B cell (primary cell): ENCODE measurements at regions of chr21 and their contacts with region 1.

Region 1: GRCh38 chr21:32727687-32728455 is at the start of gene SYNJ1:
- DNase-seq: peak; percentile 95
- ATAC-seq: peak; percentile 92
- H3K4me3 ChIP-seq: peak within 1 kb of the TSS; percentile 77 to 92 (median 88)
- H3K4me3 Mint-ChIP-seq: peak within 1 kb of the TSS; percentile 94
- H3K27ac ChIP-seq: peak within 1 kb of the TSS; percentile 32 to 54
- H3K27ac Mint-ChIP-seq: peak within 1 kb of the TSS; percentile 82
- H3K4me1 ChIP-seq: peaks cover 13 to 18% of the 10 kb centered on the region in 2 donors
- H3K4me1 Mint-ChIP-seq: peaks cover 16% of the 10 kb centered on the region
- H3K27me3 ChIP-seq: peaks cover 0 to 4% (median 0%) of the 10 kb centered on the region in 4 experiments
- H3K27me3 Mint-ChIP-seq: no peaks in the 10 kb centered on the region
- CTCF ChIP-seq: no peak
- total RNA-seq, gene SYNJ1: 9.2 and 9.4 TPM in 2 replicates

Region 2: GRCh38 chr21:32392880-32393676 is 334.8 kb before region 1 on chr21 and contains the start of gene URB1:
- CTCF ChIA-PET with region 1: no interaction called
- POLR2A ChIA-PET with region 1: no interaction called
- intact Hi-C with region 1: loop called (anchors 2 kb)
- DNase-seq: peak; percentile 93
- ATAC-seq: peak; percentile 96
- H3K4me3 ChIP-seq: peak within 1 kb of the TSS; percentile 67 to 99 (median 95)
- H3K4me3 Mint-ChIP-seq: peak within 1 kb of the TSS; percentile 92
- H3K27ac ChIP-seq: peak within 1 kb of the TSS; percentile 74 to 90
- H3K27ac Mint-ChIP-seq: peak within 1 kb of the TSS; percentile 90
- H3K4me1 ChIP-seq: peaks cover 18 to 24% of the 10 kb centered on the region in 2 donors
- H3K4me1 Mint-ChIP-seq: peaks cover 39% of the 10 kb centered on the region
- H3K27me3 ChIP-seq: peaks cover 0 to 11% (median 6%) of the 10 kb centered on the region in 4 experiments
- H3K27me3 Mint-ChIP-seq: peaks cover 11% of the 10 kb centered on the region
- CTCF ChIP-seq: no peak
- total RNA-seq, gene URB1: 14.9 and 15.2 TPM in 2 replicates

Region 3: GRCh38 chr21:32770871-32771523 is 43.1 kb after region 1 on chr21:
- CTCF ChIA-PET with region 1: interaction called, 17 read pairs
- POLR2A ChIA-PET with region 1: interaction called, 25 read pairs
- intact Hi-C with region 1: loop called (anchors 1 kb)
- DNase-seq: no peak
- ATAC-seq: peak; percentile 40
- H3K4me3 ChIP-seq: peak overlapping the region; percentile 65 to 84 (median 78)
- H3K4me3 Mint-ChIP-seq: peak overlapping the region; percentile 96
- H3K27ac ChIP-seq: peak overlapping the region; percentile 48 to 77
- H3K27ac Mint-ChIP-seq: peak overlapping the region; percentile 93
- H3K4me1 ChIP-seq: peaks cover 12 to 19% of the 10 kb centered on the region in 2 donors
- H3K4me1 Mint-ChIP-seq: peaks cover 50% of the 10 kb centered on the region
- H3K27me3 ChIP-seq: no peaks in the 10 kb centered on the region
- H3K27me3 Mint-ChIP-seq: no peaks in the 10 kb centered on the region
- CTCF ChIP-seq: no peak

Region 4: GRCh38 chr21:33491373-33492102 is 763.7 kb after region 1 on chr21 and contains the start of gene DNAJC28:
- CTCF ChIA-PET with region 1: no interaction called
- POLR2A ChIA-PET with region 1: no interaction called
- intact Hi-C with region 1: loop called (anchors 5 kb)
- DNase-seq: peak; percentile 98
- ATAC-seq: peak; percentile 97
- H3K4me3 ChIP-seq: peak within 1 kb of the TSS; percentile 65 to 87 (median 80)
- H3K4me3 Mint-ChIP-seq: peak within 1 kb of the TSS; percentile 87
- H3K27ac ChIP-seq: peak within 1 kb of the TSS; percentile 29 to 62
- H3K27ac Mint-ChIP-seq: peak within 1 kb of the TSS; percentile 87
- H3K4me1 ChIP-seq: peaks cover 0 to 9% of the 10 kb centered on the region in 2 donors
- H3K4me1 Mint-ChIP-seq: peaks cover 10% of the 10 kb centered on the region
- H3K27me3 ChIP-seq: no peaks in the 10 kb centered on the region
- H3K27me3 Mint-ChIP-seq: no peaks in the 10 kb centered on the region
- CTCF ChIP-seq: no peak
- total RNA-seq, gene DNAJC28: 2.4 and 2.5 TPM in 2 replicates

Region 5: GRCh38 chr21:34614633-34615486 is 1887.0 kb after region 1 on chr21 and contains the start of gene RCAN1:
- CTCF ChIA-PET with region 1: no interaction called
- POLR2A ChIA-PET with region 1: no interaction called
- intact Hi-C with region 1: loop called (anchors 10 kb)
- DNase-seq: peak; percentile 94
- ATAC-seq: peak; percentile 95
- H3K4me3 ChIP-seq: peak within 1 kb of the TSS; percentile 41 to 74 (median 59)
- H3K4me3 Mint-ChIP-seq: peak within 1 kb of the TSS; percentile 91
- H3K27ac ChIP-seq: peak within 1 kb of the TSS in 1 of 2 donors; percentile 71
- H3K27ac Mint-ChIP-seq: peak within 1 kb of the TSS; percentile 84
- H3K4me1 ChIP-seq: peaks cover 9 to 11% of the 10 kb centered on the region in 2 donors
- H3K4me1 Mint-ChIP-seq: peaks cover 16% of the 10 kb centered on the region
- H3K27me3 ChIP-seq: peaks cover 0 to 7% (median 0%) of the 10 kb centered on the region in 4 experiments
- H3K27me3 Mint-ChIP-seq: peaks cover 15% of the 10 kb centered on the region
- CTCF ChIP-seq: no peak
- total RNA-seq, gene RCAN1: 4.2 and 4.4 TPM in 2 replicates